Activated CD8-positive, alpha-beta T cell treated with anti-CD3 and anti-CD28 coated beads for 36 hours (primary cell): ENCODE measurements at regions of chr2 and their contacts with region 1.

Region 1: DNA sequence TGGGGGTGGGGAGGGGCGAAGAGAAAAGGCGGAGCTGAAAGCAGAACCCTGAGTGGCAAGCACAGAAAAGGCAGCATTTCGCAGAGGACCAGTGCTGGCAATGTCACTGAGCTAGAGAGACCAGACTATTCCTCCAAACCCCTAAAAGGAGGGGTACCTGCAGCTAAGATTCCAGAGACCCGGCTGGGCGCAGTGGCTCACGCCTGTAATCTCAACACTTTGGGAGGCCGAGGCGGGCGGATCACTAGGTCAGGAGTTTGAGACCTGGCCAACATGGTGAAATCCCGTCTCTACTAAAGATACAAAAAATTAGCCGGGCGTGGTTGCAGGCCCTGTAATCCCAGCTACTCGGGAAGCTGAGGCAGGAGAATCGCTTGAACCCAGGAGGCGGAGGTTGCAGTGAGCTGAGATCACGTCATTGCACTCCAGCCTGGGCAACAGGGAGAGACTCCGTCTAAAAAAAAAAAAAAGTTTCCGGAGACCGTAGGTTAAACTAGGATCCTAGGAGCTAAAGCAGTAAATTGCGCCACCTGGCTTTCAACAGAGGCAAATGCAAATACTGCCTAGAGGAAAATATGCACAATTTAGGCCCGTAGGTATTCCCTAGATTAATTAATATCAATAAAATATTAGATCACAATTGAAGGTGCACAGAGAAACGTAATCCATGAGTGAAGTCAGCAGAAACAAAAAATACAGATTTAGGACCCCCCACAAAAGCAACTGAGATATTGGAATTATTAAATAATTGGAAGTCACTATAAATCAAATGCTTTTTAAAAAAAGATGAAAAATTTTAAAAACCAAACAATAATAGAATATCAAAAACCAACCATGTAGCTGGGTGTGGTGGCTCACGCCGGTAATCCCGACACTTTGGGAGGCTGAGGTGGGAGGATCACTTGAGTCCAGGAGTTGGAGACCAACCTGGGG is 4.9 kb downstream of the UCN start:
- DNase-seq: peak; percentile 59
- ATAC-seq: peak; percentile 80
- H3K4me3 Mint-ChIP-seq: peak overlapping the region; percentile 61
- H3K27ac Mint-ChIP-seq: no peak overlapping the region
- H3K4me1 Mint-ChIP-seq: peaks cover 3% of the 10 kb centered on the region
- H3K27me3 Mint-ChIP-seq: peaks cover 18% of the 10 kb centered on the region
- CTCF ChIP-seq: peak; percentile 88

Region 2: DNA sequence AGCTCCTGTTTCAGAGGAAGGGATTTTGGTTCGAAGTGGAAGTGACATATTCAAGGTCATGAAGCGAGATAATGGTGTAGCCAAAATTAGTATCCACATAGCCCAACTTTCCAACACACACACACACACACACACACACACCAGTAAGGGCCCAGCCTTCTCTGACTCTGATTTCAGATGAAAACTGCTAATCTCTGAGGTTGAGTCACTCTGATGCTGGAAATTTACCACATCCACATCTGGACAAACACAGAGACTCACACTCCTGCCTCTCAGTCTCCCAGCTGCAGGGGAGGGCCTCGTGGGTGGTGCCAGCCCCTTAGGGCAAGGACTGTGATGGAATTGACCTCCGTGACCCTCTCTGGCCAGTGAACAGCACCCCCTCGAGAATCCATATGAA is 568.3 kb before region 1 on chr2:
- CTCF ChIA-PET with region 1: no interaction called
- POLR2A ChIA-PET with region 1: no interaction called
- intact Hi-C with region 1: no loop called
- DNase-seq: no peak
- ATAC-seq: no peak
- H3K4me3 Mint-ChIP-seq: no peak overlapping the region
- H3K27ac Mint-ChIP-seq: no peak overlapping the region
- H3K4me1 Mint-ChIP-seq: no peaks in the 10 kb centered on the region
- H3K27me3 Mint-ChIP-seq: peaks cover 2% of the 10 kb centered on the region
- CTCF ChIP-seq: no peak

Region 3: DNA sequence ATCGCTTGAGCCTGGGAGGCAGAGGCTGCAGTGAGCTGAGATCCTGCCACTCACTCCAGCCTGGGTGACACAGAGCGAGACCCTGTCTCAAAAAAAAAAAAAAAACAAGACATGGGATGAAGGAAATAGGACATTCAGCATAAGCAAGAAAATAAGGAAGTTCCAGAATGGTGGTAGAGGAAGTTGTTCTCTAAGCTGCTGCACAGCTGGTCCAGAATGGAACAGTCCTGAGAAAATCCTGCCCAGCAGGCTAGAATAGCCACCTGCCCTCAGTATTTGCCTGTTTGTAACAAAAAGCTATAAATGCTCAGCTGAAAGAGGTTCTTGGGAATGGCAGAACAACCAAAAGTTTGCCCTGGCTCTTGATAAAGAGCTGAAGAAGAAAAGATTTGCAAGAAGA is 344.0 kb before region 1 on chr2:
- CTCF ChIA-PET with region 1: interaction called, 15 read pairs
- POLR2A ChIA-PET with region 1: no interaction called
- intact Hi-C with region 1: no loop called
- DNase-seq: no peak
- ATAC-seq: no peak
- H3K4me3 Mint-ChIP-seq: no peak overlapping the region
- H3K27ac Mint-ChIP-seq: no peak overlapping the region
- H3K4me1 Mint-ChIP-seq: no peaks in the 10 kb centered on the region
- H3K27me3 Mint-ChIP-seq: peaks cover 18% of the 10 kb centered on the region
- CTCF ChIP-seq: no peak

Region 4: GRCh38 chr2:27249891-27250651 is 53.3 kb before region 1 on chr2:
- CTCF ChIA-PET with region 1: interaction called, 15 read pairs
- POLR2A ChIA-PET with region 1: no interaction called
- intact Hi-C with region 1: no loop called
- DNase-seq: peak; percentile 77
- ATAC-seq: peak; percentile 94
- H3K4me3 Mint-ChIP-seq: no peak overlapping the region
- H3K27ac Mint-ChIP-seq: no peak overlapping the region
- H3K4me1 Mint-ChIP-seq: no peaks in the 10 kb centered on the region
- H3K27me3 Mint-ChIP-seq: peaks cover 9% of the 10 kb centered on the region
- CTCF ChIP-seq: peak; percentile 91

Region 5: DNA sequence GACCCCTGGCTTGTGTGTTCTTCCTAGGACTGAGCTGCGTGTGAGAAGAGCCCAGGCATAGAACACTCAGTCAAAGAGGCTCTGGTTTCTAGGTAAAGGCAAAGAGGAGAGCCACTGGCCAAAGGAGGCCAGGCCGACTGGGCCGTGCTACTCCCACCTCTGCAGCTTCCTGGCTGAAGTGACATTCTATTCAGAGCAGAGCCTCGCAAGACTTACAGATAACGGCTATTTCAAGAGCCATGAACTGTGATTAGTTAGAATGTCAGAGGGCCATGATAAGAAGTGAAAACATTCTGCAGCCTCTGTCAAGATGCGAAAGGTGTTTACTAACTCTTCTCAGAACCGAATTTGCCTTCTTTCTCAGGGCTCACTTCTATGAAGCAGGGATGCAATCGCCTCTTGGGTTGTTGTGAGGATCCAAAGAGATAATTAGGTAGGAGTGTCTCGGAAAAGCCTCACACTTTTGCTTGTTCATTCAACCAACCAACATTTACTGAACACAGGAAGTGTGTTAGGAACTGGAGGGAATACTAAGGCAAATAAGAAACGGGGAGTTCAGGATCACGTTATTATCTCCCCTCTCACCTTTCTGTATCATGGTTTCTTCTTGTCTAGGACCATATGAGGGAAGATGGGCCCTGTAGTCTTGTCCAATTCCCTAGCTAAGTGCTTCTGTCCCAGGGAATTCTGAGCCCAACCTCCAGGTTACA is 31.6 kb before region 1 on chr2:
- CTCF ChIA-PET with region 1: interaction called, 15 read pairs
- POLR2A ChIA-PET with region 1: no interaction called
- intact Hi-C with region 1: no loop called
- DNase-seq: no peak
- ATAC-seq: no peak
- H3K4me3 Mint-ChIP-seq: no peak overlapping the region
- H3K27ac Mint-ChIP-seq: no peak overlapping the region
- H3K4me1 Mint-ChIP-seq: no peaks in the 10 kb centered on the region
- H3K27me3 Mint-ChIP-seq: peaks cover 4% of the 10 kb centered on the region
- CTCF ChIP-seq: no peak

Region 6: GRCh38 chr2:27316655-27317411 is 13.5 kb after region 1 on chr2:
- CTCF ChIA-PET with region 1: interaction called, 20 read pairs
- POLR2A ChIA-PET with region 1: no interaction called
- intact Hi-C with region 1: no loop called
- DNase-seq: no peak
- ATAC-seq: no peak
- H3K4me3 Mint-ChIP-seq: no peak overlapping the region
- H3K27ac Mint-ChIP-seq: no peak overlapping the region
- H3K4me1 Mint-ChIP-seq: peaks cover 9% of the 10 kb centered on the region
- H3K27me3 Mint-ChIP-seq: no peaks in the 10 kb centered on the region
- CTCF ChIP-seq: no peak

Region 7: GRCh38 chr2:27356382-27357181 is 53.2 kb after region 1 on chr2 and contains the start of gene GTF3C2:
- CTCF ChIA-PET with region 1: interaction called, 19 read pairs
- POLR2A ChIA-PET with region 1: no interaction called
- intact Hi-C with region 1: no loop called
- DNase-seq: peak; percentile 98
- ATAC-seq: peak; percentile 79
- H3K4me3 Mint-ChIP-seq: peak within 1 kb of the TSS; percentile 94
- H3K27ac Mint-ChIP-seq: peak within 1 kb of the TSS; percentile 99
- H3K4me1 Mint-ChIP-seq: peaks cover 48% of the 10 kb centered on the region
- H3K27me3 Mint-ChIP-seq: no peaks in the 10 kb centered on the region
- CTCF ChIP-seq: no peak
- total RNA-seq, gene GTF3C2: 57.6 to 63.6 TPM